Endothelial cell of umbilical vein (primary cell): ENCODE measurements at regions of chr6 and their contacts with region 1.

Region 1: DNA sequence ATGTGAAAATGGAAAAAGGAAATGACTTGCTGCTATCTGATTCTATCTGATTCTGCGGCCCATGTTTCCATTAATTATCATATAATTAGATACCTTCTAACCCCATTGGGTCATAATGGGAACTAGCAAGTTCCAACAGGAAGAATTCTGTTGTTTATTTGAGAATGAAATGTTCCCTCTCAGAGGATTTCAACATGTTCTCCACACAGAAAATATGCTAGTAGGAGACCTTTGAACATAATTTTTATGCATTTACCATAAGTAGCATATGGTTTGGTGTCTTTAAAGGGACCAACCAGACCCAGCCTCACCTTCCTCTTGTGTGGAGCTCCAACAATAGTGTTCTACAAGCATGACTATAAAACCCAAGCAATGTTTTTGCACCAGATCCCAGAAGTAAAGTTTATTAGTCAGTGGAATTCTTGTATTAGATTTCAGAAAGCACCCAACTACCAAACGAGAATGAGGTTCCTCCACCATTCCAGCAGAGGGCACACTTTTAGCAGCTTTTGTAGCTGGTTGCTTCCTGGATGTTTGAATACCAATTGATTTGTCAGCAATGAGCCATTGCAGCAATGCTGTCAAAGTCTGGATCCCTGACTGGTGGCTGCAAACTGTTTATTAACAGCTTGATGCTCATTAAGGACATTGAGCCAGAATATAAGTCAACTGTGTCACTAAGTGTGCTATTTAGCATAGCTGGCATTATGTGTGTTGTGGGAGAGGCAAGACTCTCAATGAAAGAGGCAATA is 143.6 kb upstream of the GJE1 start:
- DNase-seq: peak; percentile 71
- H3K4me3 ChIP-seq: no peak overlapping the region
- H3K27ac ChIP-seq: no peak overlapping the region
- H3K4me1 ChIP-seq: no peaks in the 10 kb centered on the region
- H3K27me3 ChIP-seq: no peaks in the 10 kb centered on the region
- CTCF ChIP-seq: peak; percentile 70 to 76
- POLR2A ChIP-seq: no peak

Region 2: DNA sequence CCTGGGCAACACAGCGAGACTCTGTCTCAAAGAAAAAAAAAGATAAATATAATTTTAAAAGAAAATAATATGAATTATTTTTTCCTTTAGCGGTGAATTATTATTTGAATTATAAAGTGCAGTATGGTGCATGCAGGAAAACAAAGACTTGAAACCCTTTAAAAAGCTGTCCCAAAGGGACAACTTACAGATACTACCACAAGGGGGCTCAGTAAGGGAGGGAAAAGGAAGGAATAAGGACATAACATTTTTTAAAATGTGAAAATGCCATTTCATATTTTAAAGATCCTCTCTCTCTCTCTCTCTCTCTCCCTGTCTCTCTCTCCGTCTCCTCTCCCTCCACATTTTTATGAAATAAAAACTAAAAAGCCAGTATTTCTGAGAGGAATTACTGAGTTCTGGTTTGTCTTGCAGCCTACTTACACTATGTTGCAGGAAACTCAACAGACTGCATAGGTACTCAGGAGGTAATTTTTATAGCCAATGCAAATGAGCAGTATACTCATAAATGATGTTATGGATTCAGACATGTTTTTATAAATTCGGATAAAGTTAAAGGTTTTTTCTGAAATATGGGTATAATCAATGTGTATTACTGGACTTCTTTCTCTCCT is 311.4 kb before region 1 on chr6:
- CTCF ChIA-PET with region 1: interaction called, 3 read pairs
- POLR2A ChIA-PET with region 1: no interaction called
- dilution Hi-C with region 1: no loop called
- intact Hi-C with region 1: loop called (anchors 1 kb)
- DNase-seq: peak; percentile 43
- H3K4me3 ChIP-seq: no peak overlapping the region
- H3K27ac ChIP-seq: no peak overlapping the region
- H3K4me1 ChIP-seq: no peaks in the 10 kb centered on the region
- H3K27me3 ChIP-seq: no peaks in the 10 kb centered on the region
- CTCF ChIP-seq: peak; percentile 46 to 57
- POLR2A ChIP-seq: no peak

Region 3: GRCh38 chr6:142014515-142014914 is 25.4 kb after region 1 on chr6:
- CTCF ChIA-PET with region 1: interaction called, 10 read pairs
- POLR2A ChIA-PET with region 1: no interaction called
- dilution Hi-C with region 1: no loop called
- intact Hi-C with region 1: loop called (anchors 1 kb)
- DNase-seq: peak; percentile 79
- H3K4me3 ChIP-seq: peak overlapping the region in 1 of 3 experiments; percentile 19
- H3K27ac ChIP-seq: peak overlapping the region; percentile 78
- H3K4me1 ChIP-seq: peaks cover 43% of the 10 kb centered on the region
- H3K27me3 ChIP-seq: no peaks in the 10 kb centered on the region
- CTCF ChIP-seq: no peak
- POLR2A ChIP-seq: peak; percentile 50

Region 4: DNA sequence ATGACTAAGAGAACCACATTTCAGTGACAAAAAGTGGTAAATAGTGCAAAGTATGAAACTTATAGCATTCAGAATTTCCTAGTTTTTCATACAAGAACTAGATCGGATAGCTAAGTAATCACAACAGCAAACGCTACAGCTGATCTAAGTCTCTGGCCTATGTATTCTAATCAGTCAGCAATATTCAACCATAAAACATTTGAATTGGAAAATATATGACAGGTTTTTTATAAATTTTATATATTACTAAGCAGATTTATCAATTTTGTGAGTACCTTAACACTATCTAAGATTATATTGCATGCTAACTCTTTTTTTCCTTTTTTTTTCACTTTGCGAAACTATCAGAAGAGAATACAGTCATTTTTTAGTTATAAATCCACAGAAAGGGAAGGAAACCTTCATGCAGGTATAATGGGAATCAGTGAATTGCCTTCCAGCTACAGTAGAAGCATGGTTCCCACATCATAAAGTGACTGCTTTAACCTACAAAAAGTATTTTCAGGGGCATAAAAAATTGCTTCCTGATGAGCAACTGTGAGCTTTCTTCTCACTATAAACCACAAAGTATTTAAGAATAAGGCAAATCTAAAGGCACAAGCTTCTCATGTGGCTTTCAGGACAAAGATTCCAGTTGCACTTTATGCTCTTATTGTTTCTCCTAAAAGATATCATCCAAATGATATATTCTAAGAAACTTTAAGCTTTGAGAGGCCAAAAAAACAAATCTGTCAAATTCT is 69.6 kb after region 1 on chr6:
- CTCF ChIA-PET with region 1: interaction called, 13 read pairs
- POLR2A ChIA-PET with region 1: no interaction called
- dilution Hi-C with region 1: no loop called
- intact Hi-C with region 1: no loop called
- DNase-seq: no peak
- H3K4me3 ChIP-seq: no peak overlapping the region
- H3K27ac ChIP-seq: no peak overlapping the region
- H3K4me1 ChIP-seq: no peaks in the 10 kb centered on the region
- H3K27me3 ChIP-seq: peaks cover 0 to 4% of the 10 kb centered on the region in 2 experiments
- CTCF ChIP-seq: no peak
- POLR2A ChIP-seq: no peak

Region 5: GRCh38 chr6:142112451-142113061 is 123.4 kb after region 1 on chr6:
- CTCF ChIA-PET with region 1: interaction called, 60 read pairs
- POLR2A ChIA-PET with region 1: no interaction called
- dilution Hi-C with region 1: no loop called
- intact Hi-C with region 1: loop called (anchors 1 kb)
- DNase-seq: peak; percentile 76
- H3K4me3 ChIP-seq: no peak overlapping the region
- H3K27ac ChIP-seq: no peak overlapping the region
- H3K4me1 ChIP-seq: no peaks in the 10 kb centered on the region
- H3K27me3 ChIP-seq: no peaks in the 10 kb centered on the region
- CTCF ChIP-seq: peak; percentile 57
- POLR2A ChIP-seq: no peak

Region 6: GRCh38 chr6:142537612-142538478 is 548.7 kb after region 1 on chr6:
- CTCF ChIA-PET with region 1: no interaction called
- POLR2A ChIA-PET with region 1: no interaction called
- dilution Hi-C with region 1: no loop called
- intact Hi-C with region 1: loop called (anchors 1 kb)
- DNase-seq: peak; percentile 18
- H3K4me3 ChIP-seq: no peak overlapping the region
- H3K27ac ChIP-seq: no peak overlapping the region
- H3K4me1 ChIP-seq: no peaks in the 10 kb centered on the region
- H3K27me3 ChIP-seq: no peaks in the 10 kb centered on the region
- CTCF ChIP-seq: peak; percentile 48 to 53
- POLR2A ChIP-seq: no peak